ENCODE measurements at regions of chr2 and their contacts with region 1.

Region 1: GRCh38 chr2:72770879-72771461 is 54.9 kb downstream of the EXOC6B start:
- DNase-seq: peak in 1 of 2 donors; percentile 81
- ATAC-seq: peak in 7 of 8 donors; percentile 45 to 79 (median 71)
- H3K4me3 ChIP-seq: no peak overlapping the region
- H3K27ac ChIP-seq: no peak overlapping the region
- H3K4me1 ChIP-seq: peaks cover 0 to 9% (median 2%) of the 10 kb centered on the region in 9 donors
- H3K27me3 ChIP-seq: no peaks in the 10 kb centered on the region
- CTCF ChIP-seq: peak; percentile 83 to 94 (median 86)

Region 2: GRCh38 chr2:72825241-72826155 is 54.5 kb after region 1 on chr2 and contains the start of gene EXOC6B:
- intact Hi-C with region 1: loop called in 3 of 10 experiments (anchors 2 to 5 kb)
- DNase-seq: peak; percentile 95 to 96
- ATAC-seq: peak; percentile 96 to 99 (median 97)
- H3K4me3 ChIP-seq: peak within 1 kb of the TSS; percentile 72 to 100 (median 90)
- H3K27ac ChIP-seq: peak within 1 kb of the TSS; percentile 72 to 92 (median 86)
- H3K4me1 ChIP-seq: peaks cover 3 to 49% (median 13%) of the 10 kb centered on the region in 9 donors
- H3K27me3 ChIP-seq: no peaks in the 10 kb centered on the region
- CTCF ChIP-seq: peak in 2 of 9 donors; percentile 26 to 45
- total RNA-seq, gene EXOC6B: 97.9 to 243 (median 158) TPM

Region 3: GRCh38 chr2:72851321-72851720 is 80.4 kb after region 1 on chr2:
- intact Hi-C with region 1: loop called in 2 of 10 experiments (anchors 2 to 5 kb)
- DNase-seq: no peak
- ATAC-seq: peak in 1 of 8 donors; percentile 41
- H3K4me3 ChIP-seq: no peak overlapping the region
- H3K27ac ChIP-seq: no peak overlapping the region
- H3K4me1 ChIP-seq: no peaks in the 10 kb centered on the region
- H3K27me3 ChIP-seq: peaks cover 0 to 9% (median 4%) of the 10 kb centered on the region in 7 donors
- CTCF ChIP-seq: no peak

Region 4: DNA sequence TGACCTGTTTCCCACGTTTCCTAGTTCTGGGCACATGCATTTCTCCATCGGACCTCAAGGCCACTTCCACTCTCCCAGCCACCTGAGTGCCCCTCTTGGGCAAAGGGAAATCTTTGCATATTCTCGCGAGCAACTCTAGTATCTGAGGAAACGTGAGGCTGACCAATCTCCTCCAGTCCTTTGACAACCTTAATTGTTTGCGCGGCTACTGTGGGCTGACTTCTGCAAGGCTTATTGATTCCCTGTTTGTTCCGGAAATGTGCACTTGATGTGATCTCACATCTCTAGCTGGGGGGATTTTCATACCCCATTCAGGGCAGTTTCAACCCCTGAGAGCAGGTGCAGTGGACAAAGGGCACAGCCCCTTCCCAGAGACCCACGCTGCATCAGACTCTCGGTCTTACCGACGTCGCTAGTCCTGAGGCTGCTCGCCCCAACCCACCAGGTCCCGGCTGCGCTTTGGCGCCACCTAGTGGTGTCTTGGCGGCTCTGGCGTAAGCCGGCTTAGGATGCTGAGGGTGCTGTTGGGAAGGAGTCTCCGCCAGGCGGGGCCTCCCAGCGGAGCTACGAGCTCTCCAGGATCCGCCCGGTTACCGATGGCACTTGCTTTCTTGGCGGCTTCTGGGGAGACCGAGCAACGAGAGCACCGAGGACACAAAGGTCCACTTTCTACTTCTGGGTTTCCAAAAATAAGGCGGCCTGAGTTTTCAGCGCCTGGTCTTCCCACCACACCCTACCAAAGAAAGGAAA is 91.4 kb after region 1 on chr2:
- intact Hi-C with region 1: loop called in 9 of 10 experiments (anchors 1 to 5 kb)
- DNase-seq: peak; percentile 88 to 90
- ATAC-seq: peak; percentile 94 to 99 (median 98)
- H3K4me3 ChIP-seq: peak overlapping the region in 7 of 10 donors; percentile 23 to 32 (median 30)
- H3K27ac ChIP-seq: no peak overlapping the region
- H3K4me1 ChIP-seq: peaks cover 0 to 12% (median 9%) of the 10 kb centered on the region in 9 donors
- H3K27me3 ChIP-seq: peaks cover 0 to 50% (median 4%) of the 10 kb centered on the region in 7 donors
- CTCF ChIP-seq: peak; percentile 96 to 100 (median 99)

Region 5: DNA sequence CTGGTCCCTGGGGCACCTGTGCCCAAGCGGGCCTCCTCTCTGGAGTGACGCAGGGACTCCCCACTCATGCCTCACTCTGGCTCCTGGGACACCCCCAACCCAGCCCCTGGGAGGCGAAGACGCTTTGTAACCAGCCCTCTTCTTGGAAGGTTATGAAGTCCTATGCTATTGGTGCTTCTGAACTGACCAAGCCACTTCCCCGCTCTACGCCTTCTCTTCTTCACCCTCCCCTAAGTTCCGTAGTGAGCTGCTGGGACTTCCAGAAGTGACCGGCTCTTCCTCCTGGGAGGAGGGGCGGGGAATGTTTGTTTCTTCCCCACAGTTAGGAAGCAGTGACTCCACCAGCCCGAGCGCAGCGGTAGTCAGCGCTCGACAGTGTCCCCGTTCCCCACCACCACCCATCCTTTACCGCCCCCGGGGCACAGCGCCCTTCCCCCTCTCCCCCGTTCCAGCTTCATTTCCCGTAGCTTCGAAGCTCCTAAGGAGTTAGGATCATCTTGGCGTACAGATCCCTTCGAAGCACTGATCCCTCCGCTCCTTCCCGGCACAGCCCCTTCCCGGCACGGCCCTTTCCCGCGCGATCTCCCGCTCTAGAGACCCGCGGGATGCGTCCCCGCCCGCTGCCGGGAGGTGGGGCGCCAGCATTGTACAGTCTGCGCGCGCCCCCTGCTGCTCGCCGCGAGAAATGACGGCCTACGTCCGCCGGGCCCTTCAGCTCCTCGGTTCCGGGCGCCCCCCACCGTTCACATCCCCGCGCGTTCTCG is 406.1 kb after region 1 on chr2:
- intact Hi-C with region 1: loop called in 1 of 10 experiments (anchors 10 kb)
- DNase-seq: peak; percentile 92
- ATAC-seq: peak; percentile 92 to 96 (median 94)
- H3K4me3 ChIP-seq: peak overlapping the region; percentile 26 to 75 (median 60)
- H3K27ac ChIP-seq: peak overlapping the region in 9 of 10 donors; percentile 71 to 89 (median 80)
- H3K4me1 ChIP-seq: peaks cover 4 to 31% (median 25%) of the 10 kb centered on the region in 9 donors
- H3K27me3 ChIP-seq: peaks cover 0 to 61% (median 27%) of the 10 kb centered on the region in 7 donors
- CTCF ChIP-seq: peak; percentile 97 to 99 (median 98)